Left cardiac atrium (tissue), 4 donors: ENCODE measurements at regions of chr5 and their contacts with region 1.

Region 1: DNA sequence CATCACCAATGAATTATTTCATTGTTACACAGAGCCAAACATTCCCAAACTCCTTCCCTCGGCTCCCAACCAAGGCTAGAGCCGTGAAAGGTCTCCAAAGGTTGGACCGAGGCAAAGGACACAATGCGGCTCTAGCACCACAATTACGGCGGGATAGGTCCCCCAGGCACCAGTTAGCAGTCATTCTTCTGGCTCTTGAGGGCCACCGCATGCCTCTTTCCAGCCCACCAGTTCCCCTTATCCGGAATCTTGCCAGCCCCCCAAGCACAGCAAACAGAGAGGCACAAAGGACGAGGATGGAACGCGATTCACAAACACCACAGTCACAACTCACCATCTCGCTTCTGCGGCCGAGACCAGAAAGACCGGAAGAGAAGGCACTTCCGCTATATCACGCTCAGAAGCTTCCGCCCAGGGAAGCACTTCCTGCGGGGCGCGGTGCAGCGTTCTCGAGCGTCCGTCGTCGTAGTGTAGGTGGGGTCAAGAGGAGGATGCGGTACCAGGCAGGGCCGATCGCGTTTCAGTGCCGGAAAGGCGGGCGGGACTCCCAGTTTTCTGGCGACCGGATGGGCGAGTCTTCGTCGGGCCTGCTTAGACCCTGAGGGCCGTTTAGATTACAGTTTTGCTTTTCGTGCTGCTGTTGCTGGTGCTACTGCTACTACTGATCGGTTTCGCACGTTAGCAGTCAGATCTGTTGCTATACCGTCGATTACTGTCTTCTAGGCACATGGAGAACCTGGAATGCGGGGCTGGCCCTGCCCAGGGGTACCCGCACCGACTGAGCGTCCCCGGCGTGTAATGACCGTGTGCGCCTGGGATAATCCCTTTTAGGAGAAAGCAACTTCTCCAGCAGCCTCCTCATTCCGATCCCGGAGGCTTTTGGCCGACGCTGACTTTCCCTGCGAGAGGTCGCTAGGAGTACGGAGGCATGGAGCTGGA is at the start of gene RPL37:
- DNase-seq: peak; percentile 97
- ATAC-seq: peak; percentile 99 to 100
- total RNA-seq, gene RPL37: 666 to 710 TPM

Region 2: GRCh38 chr5:40755407-40756365 is 79.4 kb before region 1 on chr5 and contains the start of gene TTC33:
- intact Hi-C with region 1: loop called in 1 of 2 experiments (anchors 5 kb)
- DNase-seq: peak; percentile 98
- ATAC-seq: peak; percentile 98 to 99
- total RNA-seq, gene TTC33: 14.1 to 17.5 TPM

Region 3: DNA sequence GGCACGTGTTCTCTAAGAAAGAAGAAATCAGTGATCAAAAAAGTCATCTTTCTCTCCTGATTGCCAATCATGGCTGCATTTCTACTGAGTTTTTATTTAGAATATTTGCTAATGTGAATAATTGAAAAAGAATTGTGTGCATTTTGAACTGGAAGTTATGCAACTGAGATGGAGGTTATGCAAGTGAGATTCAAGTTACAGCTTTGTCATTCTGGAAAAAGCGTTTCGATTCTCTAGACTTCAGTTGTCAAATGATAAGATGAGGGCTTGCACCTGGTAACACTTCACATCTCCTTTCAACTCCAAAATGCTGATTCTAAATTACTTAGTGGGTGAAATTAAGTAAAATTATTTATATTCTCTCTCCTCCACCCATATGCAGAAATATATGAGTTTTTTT is 341.8 kb after region 1 on chr5:
- intact Hi-C with region 1: no loop called
- DNase-seq: no peak
- ATAC-seq: no peak